Activated naive CD4-positive, alpha-beta T cell treated with anti-CD3 and anti-CD28 coated beads for 36 hours (primary cell): ENCODE measurements at regions of chr11 and their contacts with region 1.

Region 1: DNA sequence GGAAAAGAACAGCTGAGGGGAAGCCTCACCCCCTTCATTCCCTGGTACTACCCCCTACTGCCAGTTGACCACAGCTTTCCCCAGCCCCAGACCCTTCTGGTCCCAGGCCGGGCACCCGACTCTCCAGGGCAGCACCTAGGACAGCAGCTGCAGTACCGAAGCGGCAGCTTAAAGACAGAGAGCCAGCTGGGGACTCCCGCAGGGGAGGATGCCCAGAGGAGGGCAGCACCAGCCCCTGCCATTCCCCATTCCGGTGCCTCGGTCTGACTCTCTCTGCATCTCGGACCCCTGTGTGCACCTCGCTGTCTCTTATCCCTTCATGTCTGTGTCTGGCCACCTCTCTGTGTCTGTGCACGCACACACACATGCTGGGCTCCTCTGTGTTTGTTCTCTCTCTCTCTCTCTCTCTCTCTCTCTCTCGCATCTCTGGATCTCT is 9.4 kb downstream of the IGSF9B start:
- DNase-seq: peak; percentile 82
- H3K4me3 Mint-ChIP-seq: peak overlapping the region; percentile 14
- H3K27ac Mint-ChIP-seq: no peak overlapping the region
- H3K4me1 Mint-ChIP-seq: peaks cover 65% of the 10 kb centered on the region
- H3K27me3 Mint-ChIP-seq: no peaks in the 10 kb centered on the region

Region 2: DNA sequence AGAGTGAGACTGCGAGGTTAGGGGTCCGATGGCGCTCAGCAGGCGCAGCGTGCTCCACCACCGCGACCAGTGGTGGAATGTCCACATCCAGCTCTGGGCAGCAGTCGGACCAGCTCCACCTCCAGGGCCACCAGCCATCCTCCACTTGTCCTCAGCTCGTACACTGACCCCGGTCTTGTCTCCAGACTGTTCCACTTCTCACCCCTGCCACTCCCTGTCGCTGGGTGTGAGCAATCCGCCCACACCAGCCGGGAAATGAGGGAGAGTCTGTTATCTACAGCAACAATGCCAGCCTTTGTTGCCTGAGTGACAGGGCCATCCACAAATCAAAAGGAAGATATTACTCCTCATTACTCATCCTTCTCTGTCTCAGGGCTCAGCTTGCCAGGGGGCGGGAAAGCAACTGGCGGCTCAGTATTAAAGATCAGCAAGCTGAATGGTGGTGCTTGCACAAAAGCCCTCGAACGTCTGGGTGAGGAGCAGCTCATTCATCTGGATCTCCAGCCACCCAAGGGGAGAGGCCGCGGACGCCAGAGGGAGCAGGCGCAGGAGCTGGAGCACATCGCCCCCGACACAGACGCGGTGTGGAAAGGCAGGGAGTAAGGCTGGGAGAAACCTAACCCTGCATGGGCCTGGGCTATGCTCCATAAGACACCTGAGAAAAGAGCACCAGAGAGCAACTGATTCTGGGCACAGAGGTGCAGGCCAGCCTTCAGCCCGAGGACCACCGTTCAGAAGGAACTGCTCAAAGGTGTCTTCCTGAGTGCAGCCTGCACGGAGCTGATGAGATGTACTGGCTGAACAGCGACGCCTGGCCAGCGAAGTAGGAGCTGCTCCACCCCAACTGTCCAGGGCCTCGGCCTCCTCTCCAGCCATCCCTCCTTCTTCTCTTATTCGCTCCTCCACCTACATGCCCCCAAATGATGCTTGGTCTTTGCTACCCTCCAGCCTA is 12.5 kb before region 1 on chr11:
- CTCF ChIA-PET with region 1: interaction called, 11 read pairs
- intact Hi-C with region 1: no loop called
- DNase-seq: no peak
- H3K4me3 Mint-ChIP-seq: no peak overlapping the region
- H3K27ac Mint-ChIP-seq: no peak overlapping the region
- H3K4me1 Mint-ChIP-seq: peaks cover 7% of the 10 kb centered on the region
- H3K27me3 Mint-ChIP-seq: no peaks in the 10 kb centered on the region

Region 3: DNA sequence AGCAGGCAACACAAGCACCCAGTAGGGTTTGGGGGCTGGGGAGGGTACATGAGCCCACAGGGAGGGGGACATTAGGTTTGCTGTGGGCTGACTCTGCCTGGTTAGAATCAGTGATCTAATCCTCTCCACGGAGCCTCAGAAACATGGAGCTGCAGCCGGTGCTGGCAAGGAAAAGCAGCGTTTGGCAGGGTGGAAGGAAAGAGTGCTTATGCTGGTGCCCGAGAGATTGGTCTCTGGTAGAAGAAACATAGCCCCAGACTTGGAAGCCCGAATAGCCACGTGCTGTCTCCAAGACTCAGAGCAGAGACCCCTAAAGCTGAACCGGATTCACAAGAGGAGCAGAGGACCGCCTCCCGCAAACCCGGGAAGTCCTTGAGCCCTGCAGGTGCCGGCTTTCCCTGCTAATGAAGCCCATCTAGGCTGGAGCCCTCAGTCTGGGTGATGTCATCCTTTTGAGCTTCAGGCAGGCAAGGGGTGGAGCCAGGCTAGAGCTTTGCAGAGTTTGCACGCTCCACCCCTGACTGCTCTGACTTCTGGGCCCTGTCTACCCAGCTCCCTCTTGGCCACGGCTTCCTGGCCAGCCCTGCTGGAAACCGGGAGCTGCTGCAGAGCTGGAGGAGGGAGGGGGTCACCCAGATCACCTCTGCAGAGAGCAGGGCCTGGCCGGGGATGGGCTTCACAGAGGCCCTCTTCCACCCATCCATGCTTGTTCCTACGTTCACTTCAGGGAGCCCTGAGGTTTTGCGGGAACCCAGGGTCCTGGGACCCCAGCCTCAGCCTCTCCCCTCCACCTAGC is 86.6 kb after region 1 on chr11:
- CTCF ChIA-PET with region 1: interaction called, 5 read pairs
- intact Hi-C with region 1: loop called (anchors 1 kb)
- DNase-seq: peak; percentile 84
- H3K4me3 Mint-ChIP-seq: peak overlapping the region; percentile 44
- H3K27ac Mint-ChIP-seq: peak overlapping the region; percentile 43
- H3K4me1 Mint-ChIP-seq: peaks cover 52% of the 10 kb centered on the region
- H3K27me3 Mint-ChIP-seq: no peaks in the 10 kb centered on the region

Region 4: GRCh38 chr11:134253188-134253993 is 306.1 kb after region 1 on chr11 and contains the starts of genes ACAD8 and THYN1:
- CTCF ChIA-PET with region 1: no interaction called
- intact Hi-C with region 1: loop called (anchors 5 kb)
- DNase-seq: peak; percentile 97
- H3K4me3 Mint-ChIP-seq: peak within 1 kb of the TSS; percentile 90
- H3K27ac Mint-ChIP-seq: peak within 1 kb of the TSS; percentile 54
- H3K4me1 Mint-ChIP-seq: peaks cover 26% of the 10 kb centered on the region
- H3K27me3 Mint-ChIP-seq: no peaks in the 10 kb centered on the region
- total RNA-seq, gene ACAD8: 14.8 to 17.6 TPM
- total RNA-seq, gene THYN1: 85.6 to 92.6 TPM

Region 5: DNA sequence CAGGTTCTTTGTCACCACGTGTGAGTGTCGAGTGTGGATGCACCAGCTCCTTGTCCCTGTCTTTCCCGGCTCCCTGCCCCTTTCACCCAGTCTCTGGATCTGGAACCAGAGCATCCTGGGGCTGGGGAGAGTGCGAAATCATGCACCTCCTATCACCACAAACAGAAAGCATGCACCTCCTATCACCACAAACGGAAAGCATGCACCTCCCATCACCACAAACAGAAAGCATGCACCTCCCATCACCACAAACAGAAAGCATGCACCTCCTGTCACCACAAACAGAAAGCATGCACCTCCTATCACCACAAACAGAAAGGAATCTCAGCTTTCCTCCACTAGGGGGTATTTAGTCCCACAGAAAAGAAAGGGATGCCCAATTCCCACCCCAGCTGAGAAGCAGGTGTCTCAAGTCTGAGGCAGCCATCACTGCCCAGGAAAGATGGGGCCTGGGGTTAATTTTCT is 322.9 kb after region 1 on chr11:
- CTCF ChIA-PET with region 1: no interaction called
- intact Hi-C with region 1: loop called (anchors 5 kb)
- DNase-seq: peak; percentile 32
- H3K4me3 Mint-ChIP-seq: no peak overlapping the region
- H3K27ac Mint-ChIP-seq: peak overlapping the region; percentile 1
- H3K4me1 Mint-ChIP-seq: peaks cover 34% of the 10 kb centered on the region
- H3K27me3 Mint-ChIP-seq: no peaks in the 10 kb centered on the region